Heart right ventricle (tissue), 16 donors: ENCODE measurements at regions of chr1 and their contacts with region 1.

Region 1: GRCh38 chr1:9269078-9269501 is 23.6 kb upstream of the SPSB1 start:
- DNase-seq: no peak
- ATAC-seq: peak in 2 of 8 donors; percentile 7 to 18
- H3K4me3 ChIP-seq: no peak overlapping the region
- H3K27ac ChIP-seq: no peak overlapping the region
- H3K4me1 ChIP-seq: peaks cover 0 to 29% (median 15%) of the 10 kb centered on the region in 9 donors
- H3K27me3 ChIP-seq: no peaks in the 10 kb centered on the region
- CTCF ChIP-seq: no peak

Region 2: GRCh38 chr1:9315411-9316079 is 46.5 kb after region 1 on chr1:
- intact Hi-C with region 1: no loop called
- DNase-seq: no peak
- ATAC-seq: no peak
- H3K4me3 ChIP-seq: no peak overlapping the region
- H3K27ac ChIP-seq: peak overlapping the region in 1 of 10 donors; percentile 29
- H3K4me1 ChIP-seq: peaks cover 0 to 46% (median 15%) of the 10 kb centered on the region in 9 donors
- H3K27me3 ChIP-seq: no peaks in the 10 kb centered on the region
- CTCF ChIP-seq: no peak

Region 3: GRCh38 chr1:9352377-9353134 is 83.5 kb after region 1 on chr1:
- intact Hi-C with region 1: no loop called
- DNase-seq: no peak
- ATAC-seq: peak in 2 of 8 donors; percentile 2 to 16
- H3K4me3 ChIP-seq: no peak overlapping the region
- H3K27ac ChIP-seq: peak overlapping the region in 1 of 10 donors; percentile 51
- H3K4me1 ChIP-seq: peaks cover 3 to 28% (median 7%) of the 10 kb centered on the region in 9 donors
- H3K27me3 ChIP-seq: no peaks in the 10 kb centered on the region
- CTCF ChIP-seq: peak in 1 of 9 donors; percentile 7

Region 4: GRCh38 chr1:9455487-9456234 is 186.6 kb after region 1 on chr1:
- intact Hi-C with region 1: loop called in 6 of 10 experiments (anchors 2 to 5 kb)
- DNase-seq: peak; percentile 60 to 78
- ATAC-seq: peak; percentile 54 to 83 (median 78)
- H3K4me3 ChIP-seq: no peak overlapping the region
- H3K27ac ChIP-seq: no peak overlapping the region
- H3K4me1 ChIP-seq: peaks cover 0 to 12% (median 0%) of the 10 kb centered on the region in 9 donors
- H3K27me3 ChIP-seq: no peaks in the 10 kb centered on the region
- CTCF ChIP-seq: peak; percentile 54 to 84 (median 77)

Region 5: GRCh38 chr1:9486466-9487140 is 217.5 kb after region 1 on chr1:
- intact Hi-C with region 1: loop called in 7 of 10 experiments (anchors 1 to 5 kb)
- DNase-seq: no peak
- ATAC-seq: peak in 1 of 8 donors; percentile 35
- H3K4me3 ChIP-seq: no peak overlapping the region
- H3K27ac ChIP-seq: peak overlapping the region in 3 of 10 donors; percentile 1 to 41 (median 12)
- H3K4me1 ChIP-seq: peaks cover 0 to 6% (median 0%) of the 10 kb centered on the region in 9 donors
- H3K27me3 ChIP-seq: peaks cover 0 to 6% (median 0%) of the 10 kb centered on the region in 7 donors
- CTCF ChIP-seq: no peak

Region 6: DNA sequence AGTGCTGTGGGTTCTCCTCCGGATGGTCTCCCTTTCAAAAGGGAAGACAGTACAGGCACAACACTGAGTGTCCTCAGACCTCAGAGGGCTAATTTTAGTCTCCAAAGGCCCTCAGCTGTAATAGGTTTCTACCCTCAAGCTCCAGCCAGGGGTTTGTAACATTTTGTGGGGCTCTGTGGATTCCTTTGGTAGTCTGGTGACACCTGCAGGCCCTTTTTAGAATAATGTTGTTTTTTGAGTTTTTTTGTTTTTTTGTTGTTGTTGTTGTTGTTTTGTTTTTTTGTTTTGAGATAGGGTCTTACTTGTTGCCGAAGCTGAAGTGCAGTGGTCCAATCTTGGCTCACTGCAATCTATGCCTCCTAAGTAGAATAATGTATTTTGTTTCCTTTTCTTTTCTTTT is 304.6 kb after region 1 on chr1:
- intact Hi-C with region 1: loop called in 2 of 10 experiments (anchors 10 kb)
- DNase-seq: no peak
- ATAC-seq: peak in 7 of 8 donors; percentile 49 to 72 (median 62)
- H3K4me3 ChIP-seq: no peak overlapping the region
- H3K27ac ChIP-seq: no peak overlapping the region
- H3K4me1 ChIP-seq: peaks cover 0 to 12% (median 0%) of the 10 kb centered on the region in 9 donors
- H3K27me3 ChIP-seq: no peaks in the 10 kb centered on the region
- CTCF ChIP-seq: peak; percentile 10 to 62 (median 46)